ENCODE measurements at regions of chr1 and their contacts with region 1.

Region 1: DNA sequence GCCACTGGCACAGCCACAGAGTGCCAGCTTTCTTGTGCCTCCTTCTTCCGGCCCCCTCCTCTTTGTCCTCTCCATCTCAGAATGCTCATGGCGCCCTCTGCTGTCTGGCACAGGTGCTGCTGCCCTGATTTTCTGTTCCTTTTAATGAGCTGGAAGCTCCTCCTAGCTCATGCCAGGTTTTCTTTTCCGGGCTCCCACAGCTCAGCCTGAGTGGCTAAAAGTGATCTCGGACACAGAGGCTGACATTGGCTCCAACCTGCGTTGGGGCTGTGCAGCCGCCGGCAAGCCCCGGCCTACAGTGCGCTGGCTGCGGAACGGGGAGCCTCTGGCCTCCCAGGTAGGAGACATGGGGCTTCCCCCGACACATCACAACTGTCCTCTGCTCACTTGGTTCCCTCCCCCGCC is 18.7 kb downstream of the CNTN2 start:
- DNase-seq: peak; percentile 53
- ATAC-seq: peak; percentile 61
- H3K4me3 Mint-ChIP-seq: peak overlapping the region; percentile 15
- H3K27ac Mint-ChIP-seq: no peak overlapping the region
- H3K4me1 Mint-ChIP-seq: no peaks in the 10 kb centered on the region
- H3K27me3 Mint-ChIP-seq: no peaks in the 10 kb centered on the region
- CTCF ChIP-seq: peak; percentile 51

Region 2: DNA sequence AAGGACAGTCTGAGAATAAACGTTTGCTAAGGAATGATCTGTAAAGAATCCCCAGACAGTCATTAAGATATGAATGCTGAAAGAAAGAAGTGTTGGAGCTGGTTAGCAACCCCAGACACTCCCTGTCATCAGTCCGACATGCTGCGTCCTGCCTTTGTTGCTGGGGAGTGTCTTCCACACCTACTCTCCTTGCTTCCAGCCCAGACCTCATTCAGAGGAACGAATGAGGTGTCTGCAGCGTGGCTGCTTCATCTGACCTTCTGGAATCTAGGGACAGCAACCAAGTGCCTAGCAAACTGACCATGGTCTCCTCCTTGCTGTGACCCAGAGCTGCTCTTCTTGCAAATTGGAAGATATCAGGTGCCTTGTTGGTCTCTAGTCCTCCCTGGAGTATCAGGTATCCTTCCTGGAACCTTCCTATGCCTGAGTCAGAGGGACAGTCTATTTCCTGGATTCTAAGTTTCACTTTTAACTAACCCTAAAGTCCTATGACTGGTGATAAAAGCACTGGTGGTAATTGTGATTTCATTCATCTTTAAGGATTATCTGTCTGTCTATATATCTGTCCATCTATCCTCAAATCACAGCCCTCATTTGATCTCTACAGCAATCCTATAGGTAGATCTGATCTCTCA is 145.7 kb before region 1 on chr1:
- CTCF ChIA-PET with region 1: no interaction called
- POLR2A ChIA-PET with region 1: no interaction called
- intact Hi-C with region 1: no loop called
- DNase-seq: no peak
- ATAC-seq: no peak
- H3K4me3 Mint-ChIP-seq: no peak overlapping the region
- H3K27ac Mint-ChIP-seq: no peak overlapping the region
- H3K4me1 Mint-ChIP-seq: peaks cover 4% of the 10 kb centered on the region
- H3K27me3 Mint-ChIP-seq: peaks cover 11% of the 10 kb centered on the region
- CTCF ChIP-seq: no peak

Region 3: DNA sequence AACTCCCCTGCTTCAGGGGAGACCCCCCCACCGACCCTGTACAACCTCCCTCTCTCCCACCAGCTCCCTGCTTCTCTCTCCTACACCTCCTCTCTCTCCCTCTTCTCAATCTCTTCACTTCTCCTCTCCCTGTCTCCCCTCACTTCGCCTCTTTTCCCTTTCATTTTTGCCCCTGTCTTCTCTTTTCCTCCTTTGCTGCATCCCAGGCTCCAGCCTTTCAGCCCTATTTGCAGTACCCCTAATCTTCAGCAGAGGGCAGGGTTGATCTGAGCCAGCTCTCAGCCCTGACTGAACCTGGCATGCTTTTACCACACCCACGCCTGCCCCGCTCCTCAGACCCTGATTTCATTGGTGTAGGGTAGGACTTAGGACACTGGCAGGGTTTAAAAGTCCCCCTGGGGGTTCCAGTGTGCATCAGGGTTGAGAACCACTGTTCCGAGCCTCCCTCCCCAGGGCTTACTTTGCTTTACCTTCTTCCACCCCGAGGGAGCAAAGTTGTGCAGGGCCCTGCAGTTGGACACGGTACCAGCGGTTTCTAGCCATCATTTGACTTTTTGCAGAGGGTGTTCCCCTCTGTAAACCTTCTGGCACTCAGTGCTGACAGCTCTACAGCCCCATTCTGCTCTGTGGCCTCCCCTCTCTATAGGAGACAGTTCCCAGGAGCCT is 86.0 kb before region 1 on chr1:
- CTCF ChIA-PET with region 1: interaction called, 36 read pairs
- POLR2A ChIA-PET with region 1: no interaction called
- intact Hi-C with region 1: loop called (anchors 1 kb)
- DNase-seq: peak; percentile 38
- ATAC-seq: peak; percentile 90
- H3K4me3 Mint-ChIP-seq: no peak overlapping the region
- H3K27ac Mint-ChIP-seq: no peak overlapping the region
- H3K4me1 Mint-ChIP-seq: peaks cover 11% of the 10 kb centered on the region
- H3K27me3 Mint-ChIP-seq: peaks cover 24% of the 10 kb centered on the region
- CTCF ChIP-seq: no peak

Region 4: DNA sequence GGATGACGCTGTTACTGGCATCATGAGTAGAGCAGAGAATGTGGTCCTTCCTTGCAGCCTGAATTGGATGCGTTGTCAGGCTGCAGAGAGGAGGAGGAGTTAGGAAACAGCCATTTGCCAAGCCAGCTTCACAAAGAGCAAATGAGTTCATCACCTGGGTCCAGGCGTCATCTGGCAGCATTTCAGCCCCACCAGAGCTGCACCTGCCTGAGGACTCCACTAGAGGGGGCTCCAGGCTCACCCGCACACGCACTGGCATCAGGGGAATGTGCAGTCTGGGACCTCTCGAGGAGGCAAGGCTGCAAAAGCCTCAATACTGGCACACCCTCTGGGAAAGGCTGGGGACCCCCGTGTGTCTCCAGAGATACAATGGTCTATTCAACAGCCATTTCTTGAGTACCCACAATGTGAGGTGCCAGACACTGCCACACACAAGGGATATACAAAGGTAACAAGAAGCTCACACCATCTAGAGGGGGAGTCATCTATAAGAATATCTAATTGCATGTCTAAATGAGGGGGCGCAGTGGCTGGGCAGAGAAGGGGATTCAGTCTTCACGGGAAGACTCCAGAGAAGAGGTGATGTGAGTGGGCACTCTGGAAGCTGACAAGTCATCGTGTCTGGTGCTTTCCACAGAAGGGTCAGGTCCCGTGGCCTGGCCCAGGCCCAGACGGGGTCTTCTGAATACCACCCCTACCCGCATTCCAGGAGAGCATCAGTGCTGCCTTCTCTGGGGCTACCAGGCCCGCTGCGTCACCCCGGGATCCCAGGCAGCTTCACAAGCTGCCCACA is 72.2 kb before region 1 on chr1:
- CTCF ChIA-PET with region 1: interaction called, 48 read pairs
- POLR2A ChIA-PET with region 1: no interaction called
- intact Hi-C with region 1: loop called (anchors 1 kb)
- DNase-seq: peak; percentile 34
- ATAC-seq: peak; percentile 78
- H3K4me3 Mint-ChIP-seq: no peak overlapping the region
- H3K27ac Mint-ChIP-seq: no peak overlapping the region
- H3K4me1 Mint-ChIP-seq: peaks cover 17% of the 10 kb centered on the region
- H3K27me3 Mint-ChIP-seq: peaks cover 7% of the 10 kb centered on the region
- CTCF ChIP-seq: no peak

Region 5: GRCh38 chr1:205199090-205199930 is 137.6 kb after region 1 on chr1:
- CTCF ChIA-PET with region 1: no interaction called
- POLR2A ChIA-PET with region 1: no interaction called
- intact Hi-C with region 1: no loop called
- DNase-seq: no peak
- ATAC-seq: no peak
- H3K4me3 Mint-ChIP-seq: no peak overlapping the region
- H3K27ac Mint-ChIP-seq: no peak overlapping the region
- H3K4me1 Mint-ChIP-seq: peaks cover 10% of the 10 kb centered on the region
- H3K27me3 Mint-ChIP-seq: no peaks in the 10 kb centered on the region
- CTCF ChIP-seq: no peak